ENCODE measurements at regions of chr4 and their contacts with region 1.

Region 1: DNA sequence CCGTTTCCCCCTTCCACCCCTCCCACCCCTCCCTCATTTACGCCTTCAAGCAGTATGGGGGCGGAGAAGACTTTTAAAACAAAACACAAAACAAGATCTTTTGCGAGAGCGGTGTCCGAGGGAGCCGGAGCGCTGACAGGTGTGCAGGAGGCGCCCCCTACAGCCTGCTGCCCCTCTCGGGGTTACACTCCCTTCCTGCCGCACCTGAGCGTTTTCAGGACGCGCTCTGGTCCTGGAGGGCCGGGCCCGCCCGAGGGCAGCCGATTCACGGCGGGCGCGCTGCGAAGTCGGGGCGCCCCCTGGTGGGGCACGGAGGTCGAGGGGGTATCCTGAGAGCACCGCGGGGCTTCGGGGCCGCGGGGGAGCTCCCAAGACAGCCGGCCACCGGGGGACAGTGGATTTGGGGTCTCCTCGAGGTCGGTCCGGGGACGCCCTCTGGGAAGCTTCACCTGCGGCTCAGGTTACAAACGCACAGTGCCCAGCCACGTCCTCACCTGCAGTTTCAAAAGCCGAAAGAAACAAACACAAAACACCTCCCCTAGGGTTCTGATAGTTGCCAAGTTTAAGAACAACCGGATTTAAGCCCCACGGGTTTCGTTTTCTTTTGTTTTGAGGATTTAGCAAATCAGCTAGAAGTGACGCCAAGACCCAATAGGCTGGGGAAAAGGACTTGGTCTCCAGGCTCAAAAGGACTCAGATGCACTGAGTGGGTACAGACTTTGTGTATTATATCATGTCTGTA is 8.0 kb upstream of the NEUROG2 start:
- DNase-seq: no peak
- H3K4me3 ChIP-seq: peak overlapping the region; percentile 52
- CTCF ChIP-seq: peak; percentile 81

Region 2: GRCh38 chr4:112509243-112510141 is 14.4 kb before region 1 on chr4:
- CTCF ChIA-PET with region 1: interaction called, 27 read pairs
- POLR2A ChIA-PET with region 1: no interaction called
- DNase-seq: no peak
- H3K4me3 ChIP-seq: no peak overlapping the region; the same call in 1 of the 2 replicates
- CTCF ChIP-seq: no peak

Region 3: GRCh38 chr4:112536123-112536522 is 12.2 kb after region 1 on chr4:
- CTCF ChIA-PET with region 1: interaction called, 11 read pairs
- POLR2A ChIA-PET with region 1: no interaction called
- DNase-seq: no peak
- H3K4me3 ChIP-seq: no peak overlapping the region
- CTCF ChIP-seq: no peak

Measured in AG04449 (cell line).